ENCODE measurements at regions of chrX and their contacts with region 1.

Region 1: DNA sequence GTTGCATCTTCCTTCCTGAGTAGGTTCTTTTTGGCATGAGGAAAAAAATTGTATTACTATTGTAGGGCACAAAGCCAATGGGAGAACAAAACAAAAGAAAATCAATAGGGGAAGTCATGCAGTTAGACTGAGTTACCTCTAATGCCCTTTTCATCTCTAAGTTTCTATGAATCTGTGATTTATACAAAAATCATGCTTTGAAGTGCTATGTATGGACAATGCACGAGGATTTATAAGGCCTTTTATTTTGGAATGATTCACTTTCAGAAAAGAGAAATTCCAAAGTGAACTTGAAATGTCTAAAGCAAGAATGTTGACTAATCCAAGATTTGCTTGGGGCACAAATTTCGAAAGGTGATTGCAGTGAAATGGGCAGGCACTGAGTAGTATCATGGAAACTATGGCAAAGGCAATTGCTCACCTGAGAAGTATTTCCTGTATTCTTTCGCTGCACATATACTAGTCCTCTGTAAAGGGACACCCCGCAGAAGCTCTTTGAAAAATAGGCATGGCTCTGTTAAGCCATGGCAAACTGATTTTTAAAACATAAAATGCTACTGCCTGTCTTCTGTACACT is 52.8 kb downstream of the ADGRG4 start:
- DNase-seq: peak; percentile 61 to 99
- H3K4me3 ChIP-seq: no peak overlapping the region
- H3K27ac ChIP-seq: peak overlapping the region; percentile 95
- H3K4me1 ChIP-seq: peaks cover 38% of the 10 kb centered on the region
- H3K27me3 ChIP-seq: no peaks in the 10 kb centered on the region
- CTCF ChIP-seq: no peak

Region 2: DNA sequence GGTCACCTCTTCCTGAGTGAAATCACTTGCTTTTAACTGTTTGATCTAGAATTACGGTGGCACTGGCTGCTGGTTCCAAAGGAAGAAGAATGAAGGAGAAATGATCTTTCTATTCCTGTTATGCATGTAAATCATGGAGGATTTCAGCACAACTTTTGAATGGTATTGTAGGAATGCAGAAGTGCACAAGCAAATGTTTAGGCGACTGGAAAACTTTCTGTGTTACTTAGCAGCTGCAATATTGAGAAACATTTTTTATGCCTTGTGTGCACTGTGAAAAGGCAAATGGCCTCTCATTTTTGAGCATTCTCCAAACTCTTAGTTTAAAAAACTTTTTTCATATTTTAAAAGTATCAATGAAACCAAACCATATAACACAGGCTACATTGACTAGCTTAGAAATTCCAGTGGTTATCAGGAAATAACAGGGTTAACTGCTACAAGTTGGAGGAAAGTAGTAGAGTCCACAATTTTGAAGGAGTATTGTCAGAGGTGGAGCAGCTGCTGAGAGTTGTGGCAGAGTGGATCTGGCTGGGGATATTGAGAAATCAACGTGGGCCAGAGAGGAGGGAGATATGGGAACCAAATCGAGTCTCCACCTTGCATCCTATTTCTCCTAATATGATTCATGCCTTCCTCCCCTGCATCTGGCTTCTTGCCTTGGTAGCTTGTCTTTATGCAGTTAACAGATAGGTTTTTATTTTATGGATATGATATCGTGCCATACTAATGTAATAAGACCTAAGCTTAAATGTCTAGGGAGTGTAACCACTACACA is 238.3 kb before region 1 on chrX:
- CTCF ChIA-PET with region 1: no interaction called
- POLR2A ChIA-PET with region 1: no interaction called
- intact Hi-C with region 1: no loop called
- DNase-seq: no peak
- H3K4me3 ChIP-seq: no peak overlapping the region
- H3K27ac ChIP-seq: no peak overlapping the region
- H3K4me1 ChIP-seq: no peaks in the 10 kb centered on the region
- H3K27me3 ChIP-seq: no peaks in the 10 kb centered on the region
- CTCF ChIP-seq: no peak

Region 3: GRCh38 chrX:136130931-136131833 is 222.4 kb before region 1 on chrX:
- CTCF ChIA-PET with region 1: no interaction called
- POLR2A ChIA-PET with region 1: no interaction called
- intact Hi-C with region 1: loop called (anchors 5 kb)
- DNase-seq: peak; percentile 61 to 99
- H3K4me3 ChIP-seq: no peak overlapping the region
- H3K27ac ChIP-seq: peak overlapping the region; percentile 88
- H3K4me1 ChIP-seq: peaks cover 35% of the 10 kb centered on the region
- H3K27me3 ChIP-seq: no peaks in the 10 kb centered on the region
- CTCF ChIP-seq: no peak

Region 4: GRCh38 chrX:136397001-136397400 is 43.4 kb after region 1 on chrX:
- CTCF ChIA-PET with region 1: no interaction called
- POLR2A ChIA-PET with region 1: no interaction called
- intact Hi-C with region 1: loop called (anchors 5 kb)
- DNase-seq: peak; percentile 14 to 86
- H3K4me3 ChIP-seq: no peak overlapping the region
- H3K27ac ChIP-seq: peak overlapping the region; percentile 32
- H3K4me1 ChIP-seq: peaks cover 33% of the 10 kb centered on the region
- H3K27me3 ChIP-seq: no peaks in the 10 kb centered on the region
- CTCF ChIP-seq: peak; percentile 53